ENCODE measurements at regions of chr19 and their contacts with region 1.

Region 1: GRCh38 chr19:46697204-46697960 is 19.5 kb downstream of the PRKD2 start:
- DNase-seq: peak; percentile 100
- ATAC-seq: peak; percentile 99
- H3K4me3 Mint-ChIP-seq: peak overlapping the region; percentile 55
- H3K27ac Mint-ChIP-seq: peak overlapping the region; percentile 97
- H3K4me1 Mint-ChIP-seq: peaks cover 11% of the 10 kb centered on the region
- H3K27me3 Mint-ChIP-seq: no peaks in the 10 kb centered on the region
- CTCF ChIP-seq: no peak

Region 2: DNA sequence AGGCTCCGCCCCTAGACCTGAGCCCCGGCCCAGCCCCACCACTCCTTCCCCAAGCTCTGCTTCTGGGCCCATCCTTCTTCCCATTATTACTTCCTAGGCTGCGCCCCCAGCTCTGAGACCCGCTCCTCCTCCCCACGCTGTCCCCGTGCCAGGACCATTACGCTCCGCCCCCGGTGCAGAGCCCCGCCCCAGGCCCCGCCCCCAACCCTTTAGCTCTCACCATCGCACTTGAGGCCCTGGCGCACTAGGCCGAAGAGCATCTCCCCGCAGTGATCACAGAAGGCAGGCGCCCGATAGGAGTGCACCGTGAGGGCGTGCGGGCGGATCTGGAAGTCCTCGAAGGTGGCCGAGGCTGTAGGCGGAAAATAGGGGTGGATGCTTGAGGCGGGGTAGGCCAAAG is 13.3 kb after region 1 on chr19:
- CTCF ChIA-PET with region 1: interaction called, 11 read pairs
- POLR2A ChIA-PET with region 1: interaction called, 12 read pairs
- DNase-seq: peak; percentile 83
- ATAC-seq: peak; percentile 81
- H3K4me3 Mint-ChIP-seq: no peak overlapping the region
- H3K27ac Mint-ChIP-seq: peak overlapping the region; percentile 95
- H3K4me1 Mint-ChIP-seq: peaks cover 16% of the 10 kb centered on the region
- H3K27me3 Mint-ChIP-seq: no peaks in the 10 kb centered on the region
- CTCF ChIP-seq: no peak

Region 3: DNA sequence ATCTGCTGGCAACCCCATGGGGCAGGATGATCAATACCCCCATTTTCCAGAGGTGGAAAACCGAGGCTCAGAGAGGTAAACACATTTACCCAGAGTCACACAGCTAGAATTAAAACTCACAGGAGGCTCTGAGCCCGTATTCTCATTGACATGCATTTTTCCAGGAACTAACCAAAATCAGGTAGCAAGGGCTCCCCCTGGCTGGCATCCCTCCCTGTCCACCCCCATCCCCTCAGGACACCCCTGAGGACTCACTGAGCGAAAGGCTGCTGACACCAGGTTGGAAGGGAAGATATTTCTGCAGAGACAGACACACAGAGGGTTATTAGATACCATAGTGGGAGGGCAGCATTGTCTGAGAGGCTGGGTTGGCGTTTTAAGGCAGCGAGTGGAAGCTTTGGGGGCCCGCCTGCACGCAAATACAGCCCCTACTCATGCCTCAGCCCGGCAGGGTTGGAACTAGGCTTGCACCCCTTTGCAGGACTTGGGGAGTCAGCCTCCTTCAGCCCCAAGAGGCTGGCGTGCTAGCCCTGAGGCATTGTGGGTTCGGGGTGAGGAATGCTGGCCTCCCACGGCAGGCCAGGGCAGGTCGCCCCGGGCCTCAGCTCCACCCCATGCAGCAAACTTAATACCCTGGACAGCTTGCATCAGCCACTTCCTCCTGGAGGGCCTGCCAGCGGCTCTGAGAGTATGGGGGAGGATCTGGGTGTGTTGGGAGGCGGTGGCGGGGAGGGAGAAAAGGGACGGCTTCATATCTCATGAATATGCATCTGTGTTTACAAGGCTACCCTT is 87.1 kb after region 1 on chr19:
- CTCF ChIA-PET with region 1: no interaction called
- POLR2A ChIA-PET with region 1: no interaction called
- DNase-seq: peak; percentile 82
- ATAC-seq: peak; percentile 39
- H3K4me3 Mint-ChIP-seq: peak overlapping the region; percentile 95
- H3K27ac Mint-ChIP-seq: peak overlapping the region; percentile 92
- H3K4me1 Mint-ChIP-seq: peaks cover 45% of the 10 kb centered on the region
- H3K27me3 Mint-ChIP-seq: peaks cover 8% of the 10 kb centered on the region
- CTCF ChIP-seq: no peak

Measured in WTC11 (cell line).